Activated T-helper 2 cell treated with anti-CD3 and anti-CD28 coated beads, Interferon-gamma antibody, Interleukin-2, Interleukin-4, amounts not matched to agents 10 μg/mL and 5 μg/mL and 100 μg/mL, durations not matched to agents 14 hours and 24 hours and 36 hours (primary cell): ENCODE measurements at regions of chr6 and their contacts with region 1.

Region 1: DNA sequence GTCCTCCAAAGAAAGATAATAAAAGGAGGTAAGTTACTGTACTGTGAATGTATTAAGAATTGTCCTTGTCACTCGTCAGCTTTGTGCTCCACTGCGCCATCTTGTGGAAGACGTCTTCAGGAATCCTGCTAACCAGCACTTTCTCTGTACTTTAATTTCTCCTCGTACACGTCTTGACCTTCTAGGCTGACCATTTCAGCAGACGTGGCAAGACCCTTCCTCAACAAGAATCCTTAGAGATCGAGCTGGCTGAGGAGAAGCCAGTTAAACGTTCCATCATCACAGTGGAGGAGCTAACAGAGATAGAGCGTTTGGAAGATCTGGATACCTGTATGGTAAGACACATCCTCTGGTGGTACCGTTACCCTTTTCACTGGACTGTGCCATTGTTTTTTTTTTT is 95.5 kb upstream of the SCGN start:
- DNase-seq: peak; percentile 50
- H3K4me3 Mint-ChIP-seq: no peak overlapping the region
- H3K27ac Mint-ChIP-seq: no peak overlapping the region
- H3K4me1 Mint-ChIP-seq: peaks cover 2% of the 10 kb centered on the region
- H3K27me3 Mint-ChIP-seq: peaks cover 4% of the 10 kb centered on the region

Region 2: GRCh38 chr6:25223490-25223991 is 333.0 kb before region 1 on chr6:
- intact Hi-C with region 1: loop called (anchors 1 kb)
- DNase-seq: peak; percentile 24
- H3K4me3 Mint-ChIP-seq: peak overlapping the region; percentile 57
- H3K27ac Mint-ChIP-seq: no peak overlapping the region
- H3K4me1 Mint-ChIP-seq: peaks cover 13% of the 10 kb centered on the region
- H3K27me3 Mint-ChIP-seq: peaks cover 6% of the 10 kb centered on the region

Region 3: DNA sequence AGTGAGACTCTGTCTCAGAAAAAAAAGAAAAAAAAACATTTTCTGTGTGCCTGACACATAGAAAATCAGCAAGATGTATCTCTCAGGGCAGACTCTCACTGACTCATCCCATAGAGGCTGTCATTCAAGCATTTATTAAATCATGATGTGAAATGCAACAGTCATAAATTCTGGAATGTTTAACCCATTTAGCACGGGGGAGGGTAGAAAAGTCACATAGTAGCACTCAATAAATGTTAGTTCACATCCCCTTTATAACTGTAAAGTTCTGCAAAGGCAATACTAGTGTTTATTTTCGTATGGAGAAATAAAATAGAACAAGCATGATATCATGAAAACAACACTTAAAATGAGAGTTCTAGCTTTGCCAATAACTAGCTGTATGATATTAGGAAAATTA is 292.9 kb before region 1 on chr6:
- intact Hi-C with region 1: loop called (anchors 5 kb)
- DNase-seq: no peak
- H3K4me3 Mint-ChIP-seq: no peak overlapping the region
- H3K27ac Mint-ChIP-seq: no peak overlapping the region
- H3K4me1 Mint-ChIP-seq: peaks cover 2% of the 10 kb centered on the region
- H3K27me3 Mint-ChIP-seq: peaks cover 23% of the 10 kb centered on the region

Region 4: GRCh38 chr6:25637960-25638434 is 81.5 kb after region 1 on chr6:
- intact Hi-C with region 1: no loop called
- DNase-seq: no peak
- H3K4me3 Mint-ChIP-seq: no peak overlapping the region
- H3K27ac Mint-ChIP-seq: no peak overlapping the region
- H3K4me1 Mint-ChIP-seq: no peaks in the 10 kb centered on the region
- H3K27me3 Mint-ChIP-seq: peaks cover 12% of the 10 kb centered on the region